ENCODE measurements at regions of chrX and their contacts with region 1.

Region 1: DNA sequence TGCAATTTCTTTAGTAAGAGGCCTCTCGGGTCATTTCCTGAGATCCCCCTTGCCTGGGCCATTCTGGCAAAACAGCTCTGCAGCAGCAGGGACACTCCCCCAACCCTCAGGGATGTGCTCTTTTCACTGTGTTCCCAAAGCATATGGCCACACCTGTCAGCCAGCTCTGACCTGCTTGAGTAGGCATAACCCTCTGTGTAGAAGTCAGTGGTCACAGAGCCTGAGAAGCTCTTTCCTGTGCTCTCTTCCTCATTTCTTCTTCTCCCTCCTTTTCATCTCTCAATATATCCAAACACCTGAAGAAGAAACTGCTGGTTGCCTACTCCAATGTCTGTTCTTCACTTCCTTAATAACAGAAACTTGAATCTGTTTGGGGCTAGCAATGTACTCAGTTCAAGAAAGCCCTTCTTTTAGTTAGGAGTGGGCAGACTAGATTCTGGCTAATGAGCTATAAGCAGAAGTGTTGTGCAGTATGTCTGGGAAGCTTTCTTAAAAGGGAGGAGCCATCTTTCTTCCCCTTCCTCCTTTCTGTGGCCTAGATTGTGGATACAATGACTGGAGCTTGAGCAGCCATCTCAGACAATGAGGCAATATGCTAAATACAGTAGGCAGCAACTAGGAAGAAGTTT is 73.3 kb downstream of the PRPS1 start:
- DNase-seq: peak; percentile 58
- ATAC-seq: peak; percentile 76
- H3K4me3 ChIP-seq: no peak overlapping the region
- H3K4me3 Mint-ChIP-seq: peak overlapping the region; percentile 7
- H3K27ac ChIP-seq: peak overlapping the region; percentile 23 to 51
- H3K27ac Mint-ChIP-seq: peak overlapping the region; percentile 69
- H3K4me1 ChIP-seq: peaks cover 31 to 41% of the 10 kb centered on the region in 2 donors
- H3K4me1 Mint-ChIP-seq: peaks cover 33% of the 10 kb centered on the region
- H3K27me3 ChIP-seq: no peaks in the 10 kb centered on the region
- H3K27me3 Mint-ChIP-seq: no peaks in the 10 kb centered on the region
- CTCF ChIP-seq: no peak

Region 2: GRCh38 chrX:107683124-107683895 is 18.3 kb before region 1 on chrX:
- CTCF ChIA-PET with region 1: interaction called, 3 read pairs
- POLR2A ChIA-PET with region 1: interaction called, 4 read pairs
- intact Hi-C with region 1: loop called (anchors 2 kb)
- DNase-seq: no peak
- ATAC-seq: no peak
- H3K4me3 ChIP-seq: no peak overlapping the region
- H3K4me3 Mint-ChIP-seq: no peak overlapping the region
- H3K27ac ChIP-seq: no peak overlapping the region
- H3K27ac Mint-ChIP-seq: no peak overlapping the region
- H3K4me1 ChIP-seq: peaks cover 24 to 29% of the 10 kb centered on the region in 2 donors
- H3K4me1 Mint-ChIP-seq: peaks cover 40% of the 10 kb centered on the region
- H3K27me3 ChIP-seq: no peaks in the 10 kb centered on the region
- H3K27me3 Mint-ChIP-seq: no peaks in the 10 kb centered on the region
- CTCF ChIP-seq: no peak

Region 3: DNA sequence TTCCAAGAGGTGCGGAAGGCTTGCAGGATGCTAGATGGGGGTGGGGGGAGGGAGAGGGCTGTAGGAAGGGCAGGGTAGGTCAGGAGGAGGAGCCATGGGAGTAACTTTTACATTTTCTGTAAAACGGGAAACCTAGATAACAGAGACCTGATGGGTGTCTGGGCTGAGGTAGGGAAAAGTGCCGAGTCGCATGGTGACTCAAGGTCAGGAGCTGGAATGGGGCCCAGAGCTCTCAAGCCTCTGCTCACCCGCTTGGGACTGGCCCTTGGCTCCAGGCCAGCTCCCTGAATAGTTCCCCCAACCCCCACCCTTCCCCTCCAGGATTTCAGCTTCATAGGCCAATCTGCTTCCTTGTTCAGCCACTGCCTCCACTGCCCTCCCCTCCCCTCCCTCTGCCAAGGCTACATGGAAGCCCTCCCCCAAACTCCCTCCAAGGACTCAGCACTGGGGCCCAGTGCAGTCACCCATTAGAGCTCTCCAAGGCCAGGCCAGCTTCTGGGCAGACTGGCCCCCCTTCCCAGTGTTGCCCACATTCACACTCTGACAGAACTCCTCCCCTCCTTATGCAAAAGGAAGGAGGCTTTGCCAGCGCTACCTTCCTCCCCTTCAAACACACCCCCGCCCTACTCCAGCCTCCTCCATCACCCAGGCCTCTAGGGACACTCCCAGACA is 30.4 kb after region 1 on chrX:
- CTCF ChIA-PET with region 1: no interaction called
- POLR2A ChIA-PET with region 1: no interaction called
- intact Hi-C with region 1: no loop called
- DNase-seq: no peak
- ATAC-seq: no peak
- H3K4me3 ChIP-seq: no peak overlapping the region
- H3K4me3 Mint-ChIP-seq: no peak overlapping the region
- H3K27ac ChIP-seq: no peak overlapping the region
- H3K27ac Mint-ChIP-seq: no peak overlapping the region
- H3K4me1 ChIP-seq: peaks cover 0 to 4% of the 10 kb centered on the region in 2 donors
- H3K4me1 Mint-ChIP-seq: peaks cover 12% of the 10 kb centered on the region
- H3K27me3 ChIP-seq: no peaks in the 10 kb centered on the region
- H3K27me3 Mint-ChIP-seq: no peaks in the 10 kb centered on the region
- CTCF ChIP-seq: no peak